Activated T-helper 1 cell treated with anti-CD3 and anti-CD28 coated beads, Interleukin-12 subunit alpha, Interleukin-12 subunit beta, Interleukin-2, Interleukin-4 antibody, amounts not matched to agents 30 ng/mL and 10 ng/mL and 1 ng/mL, durations not matched to agents 14 hours and 24 hours and 36 hours (primary cell): ENCODE measurements at regions of chr6 and their contacts with region 1.

Region 1: DNA sequence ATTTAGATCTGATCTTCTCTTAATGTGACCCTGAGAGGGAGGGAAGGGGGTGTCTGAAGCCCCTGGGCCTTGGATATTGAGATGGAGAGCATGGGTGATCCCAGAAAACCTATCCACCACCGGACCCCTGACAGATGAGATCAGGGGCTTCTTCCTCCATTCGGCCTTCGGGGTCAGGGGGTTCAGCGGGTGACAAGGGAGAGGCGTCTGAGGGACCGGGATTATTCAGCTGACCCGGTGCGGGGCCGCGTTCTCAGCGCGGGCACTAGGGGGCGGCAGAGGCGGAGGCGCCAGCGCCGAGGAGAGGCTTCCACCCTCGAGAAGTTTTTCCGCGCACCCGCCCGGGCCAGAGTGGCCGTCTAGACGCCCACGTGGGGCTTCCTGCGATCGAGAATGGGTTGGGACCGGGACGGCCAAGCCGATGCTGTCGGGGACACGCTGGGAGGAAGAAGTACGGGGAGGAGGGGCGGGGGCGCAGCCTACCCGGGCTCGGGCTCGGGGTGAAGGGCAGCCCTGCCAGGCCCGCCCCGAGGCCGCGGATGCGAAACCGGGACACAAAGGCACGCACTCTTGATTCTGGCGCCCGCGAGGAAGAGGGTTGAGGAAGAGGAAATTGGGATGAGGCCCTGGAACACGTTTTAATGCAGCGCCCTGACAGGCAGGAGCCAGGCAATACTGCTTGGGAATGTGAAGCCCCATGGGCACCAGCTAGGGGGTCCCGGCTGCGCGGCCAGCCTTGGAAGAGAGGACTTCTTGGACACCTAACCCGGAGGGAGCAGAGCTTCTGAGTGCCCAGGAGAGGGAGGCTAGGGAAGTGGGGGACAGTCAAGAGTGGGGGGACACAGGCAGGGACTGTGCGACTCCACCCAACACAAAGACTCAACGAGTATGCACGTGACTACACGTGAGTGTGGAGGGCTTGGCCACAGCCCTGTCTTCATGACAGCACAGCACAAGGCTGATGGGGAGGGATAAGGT is 30.6 kb downstream of the COL11A2 start:
- DNase-seq: peak; percentile 78
- H3K4me3 Mint-ChIP-seq: peak overlapping the region; percentile 80
- H3K27ac Mint-ChIP-seq: peak overlapping the region; percentile 65
- H3K4me1 Mint-ChIP-seq: peaks cover 10% of the 10 kb centered on the region
- H3K27me3 Mint-ChIP-seq: peaks cover 4% of the 10 kb centered on the region

Region 2: GRCh38 chr6:32774426-32774825 is 387.2 kb before region 1 on chr6:
- intact Hi-C with region 1: no loop called
- DNase-seq: no peak
- H3K4me3 Mint-ChIP-seq: no peak overlapping the region
- H3K27ac Mint-ChIP-seq: no peak overlapping the region
- H3K4me1 Mint-ChIP-seq: no peaks in the 10 kb centered on the region
- H3K27me3 Mint-ChIP-seq: peaks cover 45% of the 10 kb centered on the region

Region 3: GRCh38 chr6:33123732-33124524 is 37.7 kb before region 1 on chr6:
- intact Hi-C with region 1: loop called (anchors 5 kb)
- DNase-seq: no peak
- H3K4me3 Mint-ChIP-seq: no peak overlapping the region
- H3K27ac Mint-ChIP-seq: no peak overlapping the region
- H3K4me1 Mint-ChIP-seq: peaks cover 19% of the 10 kb centered on the region
- H3K27me3 Mint-ChIP-seq: peaks cover 26% of the 10 kb centered on the region

Region 4: DNA sequence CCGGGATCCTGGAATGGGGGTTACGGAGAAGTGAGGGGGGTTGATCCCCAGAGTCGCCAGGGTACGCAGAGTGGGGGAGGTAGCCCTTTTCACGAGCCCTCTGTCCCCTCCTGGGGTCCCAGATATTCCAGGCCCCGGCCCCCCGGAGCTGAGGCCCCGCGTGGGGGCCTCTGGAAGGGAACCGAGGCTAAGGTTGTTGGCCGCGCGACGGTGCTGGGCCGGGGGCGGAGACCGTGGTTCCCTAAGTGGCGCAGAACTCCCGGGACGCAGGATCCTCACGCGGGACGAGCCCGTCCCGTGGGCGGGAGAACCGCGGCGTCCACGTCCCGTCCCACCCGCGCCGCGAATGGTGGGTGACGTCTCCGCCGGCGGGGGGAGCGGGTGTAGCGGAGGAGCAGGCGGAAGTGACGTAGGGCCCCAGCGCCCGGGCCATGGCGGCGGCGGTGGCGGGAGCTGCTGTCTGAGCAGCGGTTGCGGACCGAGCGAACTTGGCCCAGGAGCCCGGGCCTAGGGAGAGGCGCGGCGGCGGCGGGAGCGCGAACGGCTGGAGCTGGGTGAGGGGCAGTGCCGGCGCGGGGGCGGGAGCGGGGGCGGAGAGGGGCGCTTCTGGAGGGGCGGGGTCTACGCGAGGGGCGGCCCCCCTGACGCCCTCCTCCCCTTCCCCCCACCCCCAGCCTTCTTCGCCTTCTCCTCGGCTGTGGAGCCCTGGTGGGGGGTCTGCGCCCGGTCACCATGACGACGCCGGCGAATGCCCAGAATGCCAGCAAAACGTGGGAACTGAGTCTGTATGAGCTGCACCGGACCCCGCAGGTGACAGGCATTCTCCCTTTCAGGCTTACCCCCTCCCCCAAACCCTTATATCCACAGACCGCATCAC is 46.7 kb after region 1 on chr6 and contains the start of gene RING1:
- intact Hi-C with region 1: no loop called
- DNase-seq: peak; percentile 84
- H3K4me3 Mint-ChIP-seq: peak within 1 kb of the TSS; percentile 91
- H3K27ac Mint-ChIP-seq: peak within 1 kb of the TSS; percentile 96
- H3K4me1 Mint-ChIP-seq: peaks cover 50% of the 10 kb centered on the region
- H3K27me3 Mint-ChIP-seq: peaks cover 14% of the 10 kb centered on the region
- total RNA-seq, gene RING1: 50.7 and 53.4 TPM in 2 replicates